ENCODE measurements at regions of chr4 and their contacts with region 1.

Region 1: GRCh38 chr4:94256828-94257227 is 49.2 kb downstream of the SMARCAD1 start:
- DNase-seq: no peak
- ATAC-seq: no peak
- H3K4me3 Mint-ChIP-seq: no peak overlapping the region
- H3K27ac Mint-ChIP-seq: no peak overlapping the region
- H3K4me1 Mint-ChIP-seq: peaks cover 2% of the 10 kb centered on the region
- H3K27me3 Mint-ChIP-seq: no peaks in the 10 kb centered on the region

Region 2: GRCh38 chr4:93299118-93299517 is 957.7 kb before region 1 on chr4:
- CTCF ChIA-PET with region 1: no interaction called
- POLR2A ChIA-PET with region 1: no interaction called
- intact Hi-C with region 1: no loop called
- DNase-seq: no peak
- ATAC-seq: no peak
- H3K4me3 Mint-ChIP-seq: no peak overlapping the region
- H3K27ac Mint-ChIP-seq: no peak overlapping the region
- H3K4me1 Mint-ChIP-seq: no peaks in the 10 kb centered on the region
- H3K27me3 Mint-ChIP-seq: no peaks in the 10 kb centered on the region

Region 3: GRCh38 chr4:93897559-93897958 is 359.3 kb before region 1 on chr4:
- CTCF ChIA-PET with region 1: no interaction called
- POLR2A ChIA-PET with region 1: no interaction called
- intact Hi-C with region 1: loop called in 1 of 2 experiments (anchors 10 kb)
- DNase-seq: no peak
- ATAC-seq: no peak
- H3K4me3 Mint-ChIP-seq: no peak overlapping the region
- H3K27ac Mint-ChIP-seq: no peak overlapping the region
- H3K4me1 Mint-ChIP-seq: no peaks in the 10 kb centered on the region
- H3K27me3 Mint-ChIP-seq: no peaks in the 10 kb centered on the region

Region 4: DNA sequence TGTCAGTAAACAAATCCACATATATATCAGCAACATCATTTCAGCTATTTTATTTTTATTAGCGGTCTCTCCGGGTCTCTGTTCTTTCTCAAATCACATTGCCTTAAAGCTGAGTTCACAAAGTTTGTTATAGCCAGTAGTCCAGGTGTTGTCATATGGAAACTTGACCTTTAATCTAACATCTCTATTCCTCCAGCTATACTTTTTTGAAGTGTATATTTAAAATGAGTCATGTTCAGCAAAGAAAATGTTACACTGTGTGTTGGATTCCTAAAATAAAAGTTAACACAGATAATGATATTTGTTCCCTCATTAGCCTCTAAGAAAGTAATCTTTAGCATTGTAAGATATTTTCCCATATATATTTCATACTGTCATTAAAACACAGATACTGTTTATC is 14.4 kb after region 1 on chr4:
- CTCF ChIA-PET with region 1: interaction called, 3 read pairs
- POLR2A ChIA-PET with region 1: no interaction called
- intact Hi-C with region 1: loop called in 1 of 2 experiments (anchors 2 kb)
- DNase-seq: no peak
- ATAC-seq: no peak
- H3K4me3 Mint-ChIP-seq: no peak overlapping the region
- H3K27ac Mint-ChIP-seq: no peak overlapping the region
- H3K4me1 Mint-ChIP-seq: peaks cover 7% of the 10 kb centered on the region
- H3K27me3 Mint-ChIP-seq: no peaks in the 10 kb centered on the region

Region 5: DNA sequence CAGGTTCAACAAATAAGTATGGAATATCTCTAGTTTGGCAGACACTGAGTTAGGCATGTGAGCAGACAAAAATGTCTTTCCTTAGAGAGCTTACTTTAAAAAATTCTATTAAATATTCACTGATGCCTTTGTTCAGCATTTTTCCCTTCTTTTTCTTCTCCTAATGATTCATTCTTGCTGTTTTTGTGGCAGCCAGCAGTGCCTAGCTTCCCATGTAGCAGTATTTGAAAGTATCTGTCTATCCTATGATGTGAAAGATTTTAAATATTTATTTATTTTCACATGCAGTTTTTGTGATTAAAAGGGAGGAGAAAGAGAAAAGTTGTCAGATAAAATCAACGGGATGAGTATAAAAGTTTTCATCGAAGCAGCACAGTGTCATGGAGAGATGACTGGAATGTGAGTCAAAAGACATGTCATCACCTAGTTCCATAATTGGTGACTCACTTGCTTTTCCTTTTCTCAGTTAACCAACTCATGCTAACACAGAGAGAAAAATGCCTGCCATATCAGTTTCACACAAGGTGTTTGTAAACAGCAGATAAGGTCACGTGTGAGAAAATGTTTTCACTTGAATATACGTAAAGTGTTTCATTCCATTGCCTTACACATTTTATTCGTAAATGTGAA is 570.8 kb after region 1 on chr4:
- CTCF ChIA-PET with region 1: no interaction called
- POLR2A ChIA-PET with region 1: no interaction called
- intact Hi-C with region 1: no loop called
- DNase-seq: no peak
- ATAC-seq: peak; percentile 75
- H3K4me3 Mint-ChIP-seq: no peak overlapping the region
- H3K27ac Mint-ChIP-seq: no peak overlapping the region
- H3K4me1 Mint-ChIP-seq: no peaks in the 10 kb centered on the region
- H3K27me3 Mint-ChIP-seq: no peaks in the 10 kb centered on the region